CD8-positive, alpha-beta memory T cell (primary cell): ENCODE measurements at regions of chr9 and their contacts with region 1.

Region 1: GRCh38 chr9:100426530-100427428 is at the start of gene MSANTD3:
- DNase-seq: peak; percentile 39 to 70 (median 47)
- H3K4me3 ChIP-seq: peak within 1 kb of the TSS; percentile 65
- H3K4me3 Mint-ChIP-seq: peak within 1 kb of the TSS; percentile 90 to 98 (median 96)
- H3K27ac ChIP-seq: peak within 1 kb of the TSS; percentile 77
- H3K27ac Mint-ChIP-seq: peak within 1 kb of the TSS; percentile 70 to 97 (median 93)
- H3K4me1 ChIP-seq: peaks cover 12% of the 10 kb centered on the region
- H3K4me1 Mint-ChIP-seq: peaks cover 41 to 46% (median 43%) of the 10 kb centered on the region in 3 donors
- H3K27me3 ChIP-seq: no peaks in the 10 kb centered on the region
- H3K27me3 Mint-ChIP-seq: peaks cover 1 to 6% of the 10 kb centered on the region in 2 donors
- total RNA-seq, gene MSANTD3: 18.2 to 21.3 TPM

Region 2: DNA sequence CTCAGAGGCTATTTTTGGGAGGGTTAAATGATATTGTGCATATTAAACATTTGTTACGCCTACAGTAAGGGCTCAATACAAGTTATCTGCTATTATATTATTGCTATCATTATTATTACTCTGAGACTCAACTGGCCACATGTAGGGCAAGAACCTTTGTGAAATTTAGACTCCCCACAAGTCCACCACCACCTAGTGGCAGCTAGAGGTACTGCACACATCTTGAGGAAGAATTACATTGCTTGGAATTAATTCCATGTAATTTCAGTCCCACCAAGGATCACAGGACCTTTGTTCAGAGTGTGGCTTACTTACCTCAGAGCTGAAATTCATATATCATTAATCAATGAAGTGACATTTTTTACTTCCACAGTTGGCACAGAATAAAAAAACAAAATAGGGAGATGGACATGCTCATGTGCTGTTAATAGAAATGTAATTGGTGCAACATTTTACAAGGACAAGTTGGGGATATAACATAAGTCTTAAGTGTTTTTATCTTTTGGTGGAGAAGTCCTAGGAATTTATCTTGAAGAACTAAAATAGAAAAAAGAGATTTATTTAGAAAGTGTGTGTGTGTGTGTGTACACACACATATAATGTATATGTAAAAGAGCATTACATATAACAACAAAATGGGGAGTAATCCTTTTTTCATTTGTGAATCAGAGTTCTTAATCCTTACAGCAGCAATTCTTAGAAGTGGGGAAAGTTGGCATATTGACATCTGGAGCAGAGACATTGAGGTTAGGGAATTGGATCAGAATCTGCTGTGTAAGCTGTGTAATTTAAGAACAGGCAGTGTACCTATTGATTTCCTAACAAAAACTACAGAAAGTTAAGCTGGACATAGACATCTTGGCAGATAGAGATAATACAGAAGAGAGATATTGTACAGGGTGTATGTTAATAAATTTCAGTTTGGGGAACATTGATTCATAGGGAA is 11.4 kb after region 1 on chr9:
- CTCF ChIA-PET with region 1: interaction called, 21 read pairs
- POLR2A ChIA-PET with region 1: no interaction called
- DNase-seq: peak; percentile 49 to 79 (median 56)
- H3K4me3 ChIP-seq: no peak overlapping the region
- H3K4me3 Mint-ChIP-seq: no peak overlapping the region
- H3K27ac ChIP-seq: no peak overlapping the region
- H3K27ac Mint-ChIP-seq: no peak overlapping the region
- H3K4me1 ChIP-seq: no peaks in the 10 kb centered on the region
- H3K4me1 Mint-ChIP-seq: peaks cover 7 to 15% (median 12%) of the 10 kb centered on the region in 3 donors
- H3K27me3 ChIP-seq: no peaks in the 10 kb centered on the region
- H3K27me3 Mint-ChIP-seq: peaks cover 0 to 3% of the 10 kb centered on the region in 2 donors